ENCODE measurements at regions of chr16 and their contacts with region 1.

Region 1: DNA sequence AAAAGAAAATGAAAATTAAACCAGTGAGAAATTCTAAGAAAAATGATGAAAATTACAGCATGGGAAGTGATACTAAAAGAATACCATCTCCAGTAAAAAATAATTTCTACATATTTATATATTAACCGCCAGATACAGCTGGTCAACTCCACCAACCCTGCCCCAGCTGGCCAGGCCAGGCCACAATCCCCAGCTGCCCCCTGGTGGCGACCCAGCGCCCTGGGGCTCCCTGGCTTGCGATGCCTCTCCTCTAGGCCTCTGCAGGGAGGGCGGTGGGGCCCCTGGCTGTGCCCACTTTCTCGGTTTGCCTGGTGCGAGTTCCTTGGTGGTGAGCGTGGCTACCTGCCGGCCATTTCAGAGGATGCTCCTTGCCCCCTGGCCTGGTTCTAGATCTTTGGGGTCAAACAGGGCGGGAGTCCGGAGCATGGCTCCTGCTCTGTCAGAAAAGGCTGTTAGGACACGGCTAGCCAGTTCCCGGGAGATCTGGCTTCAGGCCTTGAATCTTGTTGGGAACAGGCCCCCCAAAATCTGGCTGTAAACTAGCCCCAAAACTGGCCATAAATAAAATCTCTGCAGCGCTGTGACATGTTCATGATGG is 14.5 kb downstream of the GLIS2 start:
- DNase-seq: peak; percentile 81
- H3K4me3 Mint-ChIP-seq: no peak overlapping the region
- H3K27ac Mint-ChIP-seq: no peak overlapping the region
- H3K4me1 Mint-ChIP-seq: peaks cover 5% of the 10 kb centered on the region
- H3K27me3 Mint-ChIP-seq: peaks cover 55% of the 10 kb centered on the region

Region 2: GRCh38 chr16:4261557-4262172 is 68.7 kb before region 1 on chr16:
- CTCF ChIA-PET with region 1: interaction called, 11 read pairs
- DNase-seq: peak; percentile 48
- H3K4me3 Mint-ChIP-seq: no peak overlapping the region
- H3K27ac Mint-ChIP-seq: peak overlapping the region; percentile 56
- H3K4me1 Mint-ChIP-seq: peaks cover 16% of the 10 kb centered on the region
- H3K27me3 Mint-ChIP-seq: no peaks in the 10 kb centered on the region

Region 3: DNA sequence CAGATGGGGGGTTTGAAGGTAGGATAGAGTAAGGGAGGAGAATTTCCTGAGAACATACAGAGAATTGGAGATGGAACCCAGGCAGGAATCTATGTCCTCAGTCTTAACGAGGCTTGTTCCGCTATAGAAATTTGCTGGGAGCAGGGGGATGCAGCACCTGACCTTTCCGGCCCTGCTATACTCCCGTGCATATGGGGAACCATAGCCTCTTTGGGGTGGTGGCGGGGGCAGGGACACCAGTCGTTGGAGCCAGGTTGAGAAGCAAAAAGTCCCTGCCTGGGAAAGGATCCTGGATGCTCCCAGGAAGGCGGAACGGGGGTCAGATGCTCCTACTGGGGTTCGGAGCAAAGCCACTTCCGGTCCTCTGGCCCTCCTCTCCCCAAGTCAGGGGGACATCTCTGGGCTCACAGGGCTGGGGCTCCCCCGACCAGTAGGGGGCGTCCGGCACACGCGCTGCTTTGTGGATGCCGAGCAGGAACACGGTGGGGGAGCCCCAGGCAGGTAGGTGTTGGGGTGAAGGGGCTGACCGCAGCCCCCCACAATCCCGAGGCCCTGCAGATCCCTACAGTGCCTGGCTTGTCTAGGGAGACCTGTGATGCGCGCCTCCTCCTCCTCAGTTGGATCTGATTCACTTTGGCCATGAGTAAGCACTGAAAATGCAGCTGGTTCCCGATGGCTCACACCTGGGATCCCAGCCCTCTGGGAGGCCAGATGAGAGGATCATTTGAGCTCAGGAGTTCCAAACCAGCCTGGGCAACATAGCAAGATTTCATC is 42.0 kb before region 1 on chr16:
- CTCF ChIA-PET with region 1: interaction called, 85 read pairs
- DNase-seq: peak; percentile 87
- H3K4me3 Mint-ChIP-seq: no peak overlapping the region
- H3K27ac Mint-ChIP-seq: no peak overlapping the region
- H3K4me1 Mint-ChIP-seq: peaks cover 13% of the 10 kb centered on the region
- H3K27me3 Mint-ChIP-seq: peaks cover 54% of the 10 kb centered on the region

Region 4: DNA sequence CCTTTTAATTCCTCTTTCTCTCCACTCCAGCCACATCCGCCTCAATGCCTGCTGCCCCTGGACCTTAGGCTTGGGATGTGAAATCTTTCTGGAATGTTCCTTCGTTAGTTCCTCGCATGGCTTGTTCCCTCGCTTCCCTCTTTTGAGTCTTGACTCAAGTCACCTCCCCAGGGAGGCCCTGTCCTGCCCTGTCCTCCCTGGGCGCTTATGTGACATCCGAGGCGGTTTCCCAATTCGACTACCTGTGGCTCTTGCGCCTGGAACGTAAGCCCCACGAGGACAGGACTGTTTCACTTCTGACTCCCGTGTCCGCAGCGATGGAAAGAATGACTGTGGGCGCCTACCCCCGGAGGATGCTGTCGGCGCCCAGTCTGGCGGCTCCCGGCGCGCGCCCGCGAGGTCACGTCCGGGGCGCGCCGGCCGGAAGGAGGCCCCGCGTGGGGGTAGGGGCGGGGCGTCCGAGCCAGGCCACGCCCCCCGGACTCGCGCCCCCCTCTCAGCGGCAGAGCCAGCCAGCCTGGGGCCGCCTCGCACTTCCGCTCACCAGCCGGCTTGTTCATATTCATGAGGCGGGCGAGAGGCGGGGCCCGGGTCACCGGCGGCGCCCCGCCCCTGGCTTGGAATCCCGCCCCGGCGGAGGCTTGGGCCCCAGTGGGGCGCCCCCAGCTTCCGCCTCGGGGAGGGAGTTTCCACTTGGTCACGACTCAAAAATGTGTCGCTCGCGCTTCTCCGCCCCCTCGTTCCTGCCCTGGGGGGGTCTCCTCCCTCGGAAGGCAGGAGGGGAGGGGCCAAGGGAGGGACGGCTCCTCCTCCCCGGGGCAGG is 22.9 kb before region 1 on chr16:
- CTCF ChIA-PET with region 1: interaction called, 49 read pairs
- DNase-seq: peak; percentile 97
- H3K4me3 Mint-ChIP-seq: peak overlapping the region; percentile 91
- H3K27ac Mint-ChIP-seq: peak overlapping the region; percentile 95
- H3K4me1 Mint-ChIP-seq: peaks cover 38% of the 10 kb centered on the region
- H3K27me3 Mint-ChIP-seq: peaks cover 28% of the 10 kb centered on the region

Region 5: GRCh38 chr16:4435337-4436067 is 105.1 kb after region 1 on chr16:
- CTCF ChIA-PET with region 1: no interaction called
- DNase-seq: no peak
- H3K4me3 Mint-ChIP-seq: no peak overlapping the region
- H3K27ac Mint-ChIP-seq: no peak overlapping the region
- H3K4me1 Mint-ChIP-seq: peaks cover 8% of the 10 kb centered on the region
- H3K27me3 Mint-ChIP-seq: no peaks in the 10 kb centered on the region